Sciatic nerve (tissue), 2 donors: ENCODE measurements at regions of chr11 and their contacts with region 1.

Region 1: GRCh38 chr11:104570078-104570701 is 328.1 kb downstream of the CASP12 start:
- DNase-seq: no peak
- ATAC-seq: no peak

Region 2: DNA sequence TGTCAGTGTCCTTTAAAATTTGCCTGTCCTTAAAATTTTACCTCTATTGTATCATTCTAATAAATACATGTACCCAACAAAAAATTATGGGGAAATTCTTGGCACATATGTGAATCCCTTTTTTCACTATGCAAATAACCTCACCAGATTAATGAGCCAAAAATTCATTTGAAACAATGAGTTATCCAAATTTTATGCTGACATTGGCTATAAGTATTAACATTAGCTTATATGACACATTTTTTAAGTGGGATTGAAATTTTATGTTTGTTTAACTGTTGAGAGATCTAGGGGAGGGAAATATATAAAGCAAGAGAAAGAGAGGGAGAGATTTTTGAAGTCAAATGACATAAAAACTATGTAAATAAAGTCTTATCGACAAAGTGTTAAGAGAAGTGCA is 394.4 kb before region 1 on chr11:
- intact Hi-C with region 1: loop called (anchors 5 kb)
- DNase-seq: no peak
- ATAC-seq: no peak